ENCODE measurements at regions of chr3 and their contacts with region 1.

Region 1: GRCh38 chr3:18988614-18989229 is 159.6 kb upstream of the KCNH8 start:
- DNase-seq: no peak

Region 2: GRCh38 chr3:18562364-18563154 is 426.2 kb before region 1 on chr3:
- intact Hi-C with region 1: loop called (anchors 5 kb)
- DNase-seq: no peak

Region 3: DNA sequence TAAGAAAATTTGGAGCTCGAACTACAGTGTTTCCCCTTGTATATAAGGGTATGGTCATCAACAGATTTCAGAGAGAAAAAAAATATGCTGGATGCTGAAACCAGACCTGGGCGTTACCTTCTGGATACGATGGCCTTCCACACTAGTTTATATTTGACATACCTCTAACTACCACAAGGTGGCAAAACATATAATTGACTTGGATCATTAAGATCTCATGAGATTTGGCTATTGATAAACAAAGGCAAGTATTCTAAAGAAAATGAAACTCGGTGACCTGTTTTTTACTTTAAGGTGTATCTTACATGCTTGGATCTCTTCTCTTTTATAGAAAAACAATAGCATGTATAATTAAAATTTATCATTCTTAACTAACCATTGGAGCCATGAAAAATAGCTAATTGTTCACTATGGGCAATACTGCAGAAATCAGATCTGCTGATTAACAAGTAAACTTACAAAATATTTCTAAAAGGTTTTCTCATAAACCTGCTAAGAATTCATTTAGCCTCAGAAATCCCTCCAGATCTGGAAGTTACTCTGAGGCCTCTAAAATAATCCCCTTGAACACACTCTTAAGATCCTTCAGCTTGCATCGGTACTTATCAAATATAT is 141.0 kb before region 1 on chr3:
- intact Hi-C with region 1: loop called (anchors 5 kb)
- DNase-seq: no peak

Region 4: DNA sequence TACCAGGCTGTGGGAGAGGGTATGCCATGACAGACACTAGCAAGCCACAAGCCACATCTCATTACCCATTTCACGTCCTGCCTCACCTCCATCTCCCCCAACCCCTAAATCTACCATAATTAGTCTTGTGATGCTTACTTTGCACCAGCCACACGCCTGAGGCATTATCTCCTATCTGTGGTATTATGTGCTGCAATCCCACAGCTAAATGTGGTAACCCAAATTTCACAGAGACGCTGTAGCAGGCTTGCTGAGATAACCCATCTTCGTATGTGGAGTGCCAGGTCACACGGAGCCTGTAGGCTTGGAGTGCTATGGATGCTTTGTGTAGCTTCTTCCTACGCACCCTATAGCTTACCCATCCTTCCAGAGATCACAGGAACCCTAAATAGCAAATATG is 97.1 kb before region 1 on chr3:
- intact Hi-C with region 1: loop called (anchors 2 kb)
- DNase-seq: peak in 6 of 10 donors; percentile 17 to 83 (median 42)

Region 5: DNA sequence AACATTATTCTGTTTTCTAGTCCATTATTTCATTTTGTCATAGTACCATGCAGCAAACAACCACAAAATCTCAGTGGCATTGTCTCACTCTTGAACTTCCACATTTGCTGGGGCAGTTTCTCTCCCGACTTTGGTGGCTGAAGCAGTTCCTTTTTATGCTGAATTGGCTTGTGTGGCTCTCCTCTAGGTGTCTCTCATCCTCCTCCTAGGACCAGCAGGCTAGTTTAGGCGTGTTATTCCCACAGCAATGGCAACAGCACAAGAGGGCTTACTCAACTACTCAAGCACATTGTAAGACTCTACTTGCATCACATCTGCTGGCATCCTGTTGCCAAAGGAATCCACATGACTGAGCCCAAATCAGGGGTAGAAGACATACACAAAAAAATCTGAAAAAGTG is 42.2 kb before region 1 on chr3:
- intact Hi-C with region 1: no loop called
- DNase-seq: peak in 2 of 10 donors; percentile 2 to 9